Activated T-helper 1 cell treated with anti-CD3 and anti-CD28 coated beads, Interleukin-12 subunit alpha, Interleukin-12 subunit beta, Interleukin-2, Interleukin-4 antibody, amounts not matched to agents 30 ng/mL and 10 ng/mL and 1 ng/mL, durations not matched to agents 14 hours and 24 hours and 36 hours (primary cell): ENCODE measurements at regions of chr20 and their contacts with region 1.

Region 1: GRCh38 chr20:63178889-63179686 is 36.8 kb downstream of the YTHDF1 start:
- DNase-seq: peak; percentile 33
- H3K4me3 Mint-ChIP-seq: no peak overlapping the region
- H3K27ac Mint-ChIP-seq: peak overlapping the region; percentile 67
- H3K4me1 Mint-ChIP-seq: no peaks in the 10 kb centered on the region
- H3K27me3 Mint-ChIP-seq: peaks cover 22% of the 10 kb centered on the region

Region 2: GRCh38 chr20:62937366-62938104 is 241.6 kb before region 1 on chr20:
- intact Hi-C with region 1: no loop called
- DNase-seq: peak; percentile 96
- H3K4me3 Mint-ChIP-seq: peak overlapping the region; percentile 88
- H3K27ac Mint-ChIP-seq: peak overlapping the region; percentile 98
- H3K4me1 Mint-ChIP-seq: peaks cover 41% of the 10 kb centered on the region
- H3K27me3 Mint-ChIP-seq: no peaks in the 10 kb centered on the region

Region 3: DNA sequence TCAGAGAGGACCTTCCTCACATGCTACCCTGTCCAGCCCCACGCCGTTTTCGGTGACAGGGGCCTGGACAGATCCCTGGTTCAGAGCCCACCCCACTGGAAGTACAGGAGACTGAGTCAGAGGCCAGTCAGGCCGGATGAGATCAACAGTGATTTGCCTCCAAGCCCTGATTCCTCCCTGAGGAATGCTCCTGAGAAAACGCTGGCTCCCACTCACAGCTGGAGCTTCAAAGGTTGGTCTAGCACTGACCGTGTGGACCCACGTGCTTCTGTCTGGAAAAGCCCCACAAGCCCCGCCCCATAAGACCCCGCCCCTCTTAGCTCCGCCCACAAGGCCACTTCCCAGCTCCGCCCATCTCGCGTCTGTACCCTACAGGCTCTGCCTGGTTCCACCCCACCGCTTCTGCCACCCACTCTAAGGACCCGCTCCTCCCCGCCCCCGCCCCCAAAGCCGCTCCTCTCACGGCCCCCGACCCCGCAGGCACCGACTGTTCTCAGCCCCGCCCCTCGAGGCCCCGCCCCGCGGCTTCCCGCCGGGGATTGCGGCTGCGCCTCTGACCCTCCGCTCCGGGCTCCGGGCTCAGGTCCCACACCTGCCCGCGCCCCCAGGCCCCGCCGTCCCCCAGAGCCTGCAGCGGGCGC is 107.4 kb before region 1 on chr20:
- intact Hi-C with region 1: loop called (anchors 10 kb)
- DNase-seq: no peak
- H3K4me3 Mint-ChIP-seq: no peak overlapping the region
- H3K27ac Mint-ChIP-seq: no peak overlapping the region
- H3K4me1 Mint-ChIP-seq: no peaks in the 10 kb centered on the region
- H3K27me3 Mint-ChIP-seq: peaks cover 21% of the 10 kb centered on the region

Region 4: DNA sequence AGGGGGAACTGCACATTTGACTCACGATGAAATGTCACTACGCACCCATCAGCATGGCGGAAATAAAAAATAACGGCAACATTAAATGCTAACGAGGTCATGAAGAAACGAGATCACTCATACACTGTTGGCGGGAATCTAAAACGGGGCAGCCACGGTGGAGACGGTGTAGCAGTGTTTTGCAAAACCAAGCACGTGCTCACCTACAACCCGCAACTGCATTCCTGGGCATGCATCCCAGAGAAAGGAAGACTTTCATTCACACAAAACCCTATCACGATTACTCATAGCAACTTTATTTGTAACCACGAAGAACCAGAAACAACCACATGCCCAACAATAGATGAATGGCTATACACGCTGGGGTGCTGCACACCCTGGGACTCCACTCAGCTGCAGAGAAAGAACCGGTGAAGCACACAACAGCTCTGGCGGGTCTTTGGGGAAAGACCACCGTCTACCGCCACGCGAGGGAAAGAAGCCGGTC is 40.2 kb before region 1 on chr20:
- intact Hi-C with region 1: no loop called
- DNase-seq: no peak
- H3K4me3 Mint-ChIP-seq: no peak overlapping the region
- H3K27ac Mint-ChIP-seq: no peak overlapping the region
- H3K4me1 Mint-ChIP-seq: no peaks in the 10 kb centered on the region
- H3K27me3 Mint-ChIP-seq: no peaks in the 10 kb centered on the region